Calu3 (cell line): ENCODE measurements at regions of chr3 and their contacts with region 1.

Region 1: GRCh38 chr3:170307671-170308403 is 49.7 kb upstream of the SKIL start:
- DNase-seq: peak; percentile 62
- H3K4me3 Mint-ChIP-seq: peak overlapping the region; percentile 52
- H3K27ac Mint-ChIP-seq: peak overlapping the region; percentile 96
- H3K4me1 Mint-ChIP-seq: peaks cover 16% of the 10 kb centered on the region
- H3K27me3 Mint-ChIP-seq: no peaks in the 10 kb centered on the region
- CTCF ChIP-seq: no peak

Region 2: GRCh38 chr3:170368921-170369320 is 61.1 kb after region 1 on chr3:
- CTCF ChIA-PET with region 1: interaction called, 3 read pairs
- intact Hi-C with region 1: loop called (anchors 1 kb)
- DNase-seq: no peak
- H3K4me3 Mint-ChIP-seq: no peak overlapping the region
- H3K27ac Mint-ChIP-seq: no peak overlapping the region
- H3K4me1 Mint-ChIP-seq: peaks cover 58% of the 10 kb centered on the region
- H3K27me3 Mint-ChIP-seq: no peaks in the 10 kb centered on the region
- CTCF ChIP-seq: peak; percentile 44